SK-N-SH (cell line): ENCODE measurements at regions of chr22 and their contacts with region 1.

Region 1: GRCh38 chr22:37623075-37624016 is 14.7 kb downstream of the GGA1 start:
- DNase-seq: peak; percentile 94
- H3K4me3 ChIP-seq: no peak overlapping the region
- H3K27ac ChIP-seq: peak overlapping the region in 1 of 2 experiments; percentile 56; a peak in 1 of 4 replicates
- H3K4me1 ChIP-seq: peaks cover 0 to 4% of the 10 kb centered on the region in 2 experiments; a peak in 1 of 4 replicates
- H3K27me3 ChIP-seq: no peaks in the 10 kb centered on the region
- CTCF ChIP-seq: peak; percentile 89
- EP300 ChIP-seq: no peak
- RAD21 ChIP-seq: peak; percentile 65

Region 2: GRCh38 chr22:37633625-37634416 is 10.5 kb after region 1 on chr22:
- CTCF ChIA-PET with region 1: interaction called, 23 read pairs
- POLR2A ChIA-PET with region 1: interaction called, 8 read pairs
- DNase-seq: peak; percentile 91
- H3K4me3 ChIP-seq: peak overlapping the region; percentile 2 to 7; a peak in 2 of 4 replicates
- H3K27ac ChIP-seq: peak overlapping the region; percentile 69 to 98
- H3K4me1 ChIP-seq: peaks cover 23 to 51% of the 10 kb centered on the region in 2 experiments
- H3K27me3 ChIP-seq: no peaks in the 10 kb centered on the region
- CTCF ChIP-seq: peak; percentile 41
- EP300 ChIP-seq: peak in 1 of 2 experiments; percentile 25; a peak in 1 of 4 replicates
- RAD21 ChIP-seq: no peak; the same call in 1 of the 2 replicates